Activated CD4-positive, alpha-beta T cell treated with anti-CD3 and anti-CD28 coated beads, Interleukin-2, amount 10 ng/mL, durations not matched to agents 24 days and 14 days (primary cell): ENCODE measurements at regions of chr6 and their contacts with region 1.

Region 1: GRCh38 chr6:46781478-46782378 is 11.5 kb upstream of the MEP1A start:
- DNase-seq: peak; percentile 63
- H3K4me3 Mint-ChIP-seq: no peak overlapping the region
- H3K27ac Mint-ChIP-seq: no peak overlapping the region
- H3K4me1 Mint-ChIP-seq: no peaks in the 10 kb centered on the region
- H3K27me3 Mint-ChIP-seq: no peaks in the 10 kb centered on the region

Region 2: GRCh38 chr6:46419576-46420002 is 362.1 kb before region 1 on chr6:
- intact Hi-C with region 1: loop called (anchors 5 kb)
- DNase-seq: peak; percentile 72
- H3K4me3 Mint-ChIP-seq: no peak overlapping the region
- H3K27ac Mint-ChIP-seq: no peak overlapping the region
- H3K4me1 Mint-ChIP-seq: no peaks in the 10 kb centered on the region
- H3K27me3 Mint-ChIP-seq: peaks cover 18% of the 10 kb centered on the region

Region 3: GRCh38 chr6:46815130-46815529 is 33.4 kb after region 1 on chr6:
- intact Hi-C with region 1: no loop called
- DNase-seq: no peak
- H3K4me3 Mint-ChIP-seq: no peak overlapping the region
- H3K27ac Mint-ChIP-seq: no peak overlapping the region
- H3K4me1 Mint-ChIP-seq: no peaks in the 10 kb centered on the region
- H3K27me3 Mint-ChIP-seq: peaks cover 3% of the 10 kb centered on the region

Region 4: DNA sequence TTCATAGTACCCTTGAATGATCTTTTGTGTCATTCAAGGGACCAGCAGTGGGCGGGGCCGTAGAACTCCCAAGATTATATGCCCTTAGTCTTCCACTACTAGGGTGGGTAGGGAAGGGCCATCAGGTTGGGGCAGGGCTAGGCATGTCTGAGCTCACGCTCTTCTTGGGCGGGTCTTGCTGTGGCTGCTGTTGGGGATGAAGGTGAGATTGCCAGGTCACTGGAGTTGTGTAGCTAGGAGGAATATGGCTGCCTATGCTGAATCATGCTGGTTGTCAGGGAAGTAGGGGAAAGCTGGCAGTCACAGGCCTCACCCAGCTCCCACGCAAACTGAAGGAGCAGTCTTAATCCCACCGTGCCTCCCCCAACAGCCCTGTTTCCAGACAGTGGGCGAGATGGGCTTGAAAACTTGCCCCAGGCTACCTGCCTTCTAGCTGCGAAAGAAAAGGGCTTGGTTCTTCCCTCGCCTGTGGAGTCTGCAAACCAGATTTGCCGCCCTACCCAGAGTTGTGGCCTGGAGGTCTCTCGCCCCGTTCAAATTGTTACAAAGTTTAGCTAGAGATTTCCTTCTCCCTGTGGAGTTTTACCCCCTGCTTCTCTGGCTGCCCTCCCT is 840.2 kb after region 1 on chr6:
- intact Hi-C with region 1: no loop called
- DNase-seq: no peak
- H3K4me3 Mint-ChIP-seq: no peak overlapping the region
- H3K27ac Mint-ChIP-seq: no peak overlapping the region
- H3K4me1 Mint-ChIP-seq: no peaks in the 10 kb centered on the region
- H3K27me3 Mint-ChIP-seq: no peaks in the 10 kb centered on the region